Naive thymus-derived CD8-positive, alpha-beta T cell (primary cell): ENCODE measurements at regions of chr2 and their contacts with region 1.

Region 1: DNA sequence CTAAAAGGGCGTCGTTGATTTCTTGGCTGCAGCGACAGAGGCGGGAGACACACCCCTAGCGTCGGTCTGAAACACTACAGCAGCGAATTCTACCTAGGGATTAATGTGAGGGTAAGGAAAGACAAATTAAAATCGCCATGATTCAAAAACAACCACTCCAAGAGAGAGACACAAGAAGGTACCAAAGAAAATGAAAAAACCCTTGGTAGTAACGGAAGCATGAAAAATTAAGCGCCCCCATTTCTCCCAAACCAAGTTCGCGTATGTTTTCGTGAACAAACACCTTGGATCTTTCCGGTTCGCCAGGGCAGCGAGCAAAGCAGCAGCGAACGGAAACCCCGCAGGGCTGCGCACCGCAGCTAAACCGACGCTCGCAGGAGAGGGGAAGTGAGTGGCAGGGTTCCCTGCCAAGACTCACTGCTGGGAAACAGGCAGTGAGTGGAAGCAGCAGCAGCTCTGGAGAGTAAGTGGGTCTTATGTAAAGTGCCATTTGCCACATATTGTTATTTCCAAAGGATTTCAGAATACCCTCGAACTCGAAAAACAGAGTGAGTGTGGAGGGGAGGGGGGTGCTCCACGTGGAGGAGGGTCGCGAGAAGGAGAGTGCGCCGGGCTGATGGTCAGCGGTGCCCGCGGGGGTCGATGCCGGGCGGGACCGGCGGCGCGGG is 1.0 kb downstream of the PPP3R1 start:
- DNase-seq: peak; percentile 52 to 89 (median 76)
- ATAC-seq: peak; percentile 63 to 71
- H3K4me3 Mint-ChIP-seq: peak overlapping the region; percentile 84 to 98 (median 94)
- H3K27ac Mint-ChIP-seq: peak overlapping the region in 8 of 10 donors; percentile 92 to 99 (median 94)
- H3K4me1 Mint-ChIP-seq: peaks cover 16 to 50% (median 44%) of the 10 kb centered on the region in 4 donors
- H3K27me3 Mint-ChIP-seq: peaks cover 0 to 2% (median 0%) of the 10 kb centered on the region in 5 donors

Region 2: DNA sequence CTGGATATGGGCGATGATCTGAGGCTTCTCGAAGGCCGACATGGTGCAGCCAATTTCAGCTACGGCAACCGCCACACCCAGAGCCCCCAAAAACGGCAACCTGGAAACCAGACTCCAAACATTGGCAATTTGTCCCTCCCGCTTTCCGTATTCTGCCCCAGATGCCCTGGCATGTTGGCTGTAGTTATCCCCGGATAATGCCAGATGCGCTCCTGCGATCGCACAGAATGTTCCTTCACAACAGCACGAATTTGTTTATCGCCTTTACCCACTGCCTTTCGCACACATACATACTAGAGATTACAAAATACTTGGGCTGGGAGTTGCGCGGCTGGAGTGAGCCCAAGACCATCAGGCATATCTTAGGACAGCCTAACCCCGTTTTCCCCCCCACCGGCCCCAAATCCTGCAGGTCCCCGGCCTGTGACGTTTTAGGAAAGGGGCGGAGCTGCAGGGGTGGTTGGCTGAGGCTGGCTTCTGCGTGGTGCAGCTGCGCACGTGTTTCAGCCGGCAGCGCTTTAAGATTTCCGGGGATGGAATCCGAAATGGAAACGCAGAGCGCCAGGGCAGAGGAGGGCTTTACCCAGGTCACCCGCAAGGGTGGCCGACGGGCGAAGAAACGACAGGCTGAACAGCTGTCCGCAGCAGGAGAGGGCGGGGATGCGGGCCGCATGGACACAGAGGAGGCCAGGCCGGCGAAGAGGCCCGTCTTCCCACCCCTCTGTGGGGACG is 93.8 kb before region 1 on chr2 and contains the start of gene PNO1:
- POLR2A ChIA-PET with region 1: interaction called, 30 read pairs
- DNase-seq: peak; percentile 88 to 99 (median 98)
- ATAC-seq: peak; percentile 87 to 90
- H3K4me3 Mint-ChIP-seq: peak within 1 kb of the TSS; percentile 89 to 99 (median 98)
- H3K27ac Mint-ChIP-seq: peak within 1 kb of the TSS; percentile 99 to 100 (median 100)
- H3K4me1 Mint-ChIP-seq: peaks cover 21 to 64% (median 58%) of the 10 kb centered on the region in 4 donors
- H3K27me3 Mint-ChIP-seq: no peaks in the 10 kb centered on the region
- polyA plus RNA-seq, gene PNO1: 19.6 to 24.5 (median 20.1) TPM

Region 3: GRCh38 chr2:68196120-68196716 is 55.1 kb before region 1 on chr2:
- POLR2A ChIA-PET with region 1: interaction called, 16 read pairs
- DNase-seq: peak in 9 of 10 donors; percentile 19 to 77 (median 53)
- ATAC-seq: peak; percentile 64 to 65
- H3K4me3 Mint-ChIP-seq: peak overlapping the region in 1 of 10 donors; percentile 5
- H3K27ac Mint-ChIP-seq: peak overlapping the region in 7 of 10 donors; percentile 17 to 76 (median 44)
- H3K4me1 Mint-ChIP-seq: peaks cover 15 to 66% (median 51%) of the 10 kb centered on the region in 4 donors
- H3K27me3 Mint-ChIP-seq: no peaks in the 10 kb centered on the region

Region 4: GRCh38 chr2:68272246-68272994 is 21.1 kb after region 1 on chr2:
- POLR2A ChIA-PET with region 1: no interaction called
- DNase-seq: no peak
- ATAC-seq: no peak
- H3K4me3 Mint-ChIP-seq: no peak overlapping the region
- H3K27ac Mint-ChIP-seq: no peak overlapping the region
- H3K4me1 Mint-ChIP-seq: peaks cover 0 to 4% (median 0%) of the 10 kb centered on the region in 4 donors
- H3K27me3 Mint-ChIP-seq: peaks cover 0 to 9% (median 5%) of the 10 kb centered on the region in 5 donors

Region 5: GRCh38 chr2:68423966-68424650 is 172.8 kb after region 1 on chr2:
- POLR2A ChIA-PET with region 1: no interaction called
- DNase-seq: no peak
- ATAC-seq: peak; percentile 20 to 60
- H3K4me3 Mint-ChIP-seq: no peak overlapping the region
- H3K27ac Mint-ChIP-seq: no peak overlapping the region
- H3K4me1 Mint-ChIP-seq: peaks cover 0 to 51% (median 2%) of the 10 kb centered on the region in 4 donors
- H3K27me3 Mint-ChIP-seq: no peaks in the 10 kb centered on the region